ENCODE measurements at regions of chr2 and their contacts with region 1.

Region 1: DNA sequence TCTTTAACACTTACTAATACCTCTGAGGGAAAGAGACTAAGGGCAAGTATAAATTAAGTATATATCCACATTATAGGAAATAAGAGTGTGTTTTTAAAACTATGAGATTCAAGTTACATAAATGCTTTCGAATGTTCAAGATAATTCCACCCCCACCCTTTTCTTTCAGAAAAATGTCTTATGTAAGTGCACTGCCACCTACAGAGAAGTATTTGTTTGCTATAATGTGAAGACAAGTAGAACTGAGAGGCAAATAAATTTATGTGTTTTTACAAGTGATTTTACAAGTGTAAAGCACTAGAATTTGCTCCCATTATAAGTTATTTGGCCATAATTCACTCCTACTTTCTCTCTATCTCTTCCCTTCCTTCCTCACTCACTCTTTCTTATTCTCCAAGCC is 99.9 kb upstream of the CRACDL start:
- DNase-seq: no peak
- H3K4me3 ChIP-seq: no peak overlapping the region
- H3K27ac ChIP-seq: no peak overlapping the region
- H3K4me1 ChIP-seq: no peaks in the 10 kb centered on the region
- CTCF ChIP-seq: no peak

Region 2: DNA sequence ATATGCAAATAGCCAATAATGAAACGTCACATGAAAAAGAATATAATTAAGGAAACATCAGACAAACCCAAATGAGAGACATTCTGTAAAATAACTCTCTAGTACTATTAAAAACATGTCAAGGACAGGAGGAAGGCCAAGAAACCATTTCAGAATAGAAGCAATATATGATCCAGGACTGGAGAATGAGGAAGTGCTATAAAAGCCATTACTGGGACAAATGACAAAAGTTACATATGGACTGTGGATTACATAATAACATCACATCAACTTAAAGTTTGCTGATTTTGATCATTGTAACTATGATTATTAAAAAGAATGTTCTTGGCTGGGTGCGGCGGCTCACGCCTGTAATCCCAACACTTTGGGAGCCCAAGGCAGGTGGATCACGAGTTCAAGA is 181.2 kb before region 1 on chr2:
- CTCF ChIA-PET with region 1: no interaction called
- POLR2A ChIA-PET with region 1: no interaction called
- intact Hi-C with region 1: loop called (anchors 10 kb)
- DNase-seq: no peak
- H3K4me3 ChIP-seq: no peak overlapping the region
- H3K27ac ChIP-seq: no peak overlapping the region
- H3K4me1 ChIP-seq: no peaks in the 10 kb centered on the region
- CTCF ChIP-seq: no peak

Measured in OCI-LY7 (cell line).